Activated CD4-positive, alpha-beta memory T cell treated with anti-CD3 and anti-CD28 coated beads, Interleukin-2, amount 10 ng/mL, durations not matched to agents 7 days and 5 days (primary cell): ENCODE measurements at regions of chr2 and their contacts with region 1.

Region 1: GRCh38 chr2:24792874-24793760 is at the starts of genes CENPO and PTRHD1:
- DNase-seq: peak; percentile 96
- H3K4me3 Mint-ChIP-seq: peak within 1 kb of the TSS; percentile 96
- H3K27ac Mint-ChIP-seq: peak within 1 kb of the TSS; percentile 98
- H3K4me1 Mint-ChIP-seq: peaks cover 53% of the 10 kb centered on the region
- H3K27me3 Mint-ChIP-seq: no peaks in the 10 kb centered on the region
- total RNA-seq, gene CENPO: 40.3 to 42.9 TPM
- total RNA-seq, gene PTRHD1: 25.4 to 25.5 TPM

Region 2: GRCh38 chr2:24920098-24920808 is 127.1 kb after region 1 on chr2 and contains the start of gene ADCY3:
- CTCF ChIA-PET with region 1: no interaction called
- POLR2A ChIA-PET with region 1: interaction called, 15 read pairs
- DNase-seq: peak; percentile 70
- H3K4me3 Mint-ChIP-seq: peak within 1 kb of the TSS; percentile 83
- H3K27ac Mint-ChIP-seq: peak within 1 kb of the TSS; percentile 72
- H3K4me1 Mint-ChIP-seq: peaks cover 39% of the 10 kb centered on the region
- H3K27me3 Mint-ChIP-seq: no peaks in the 10 kb centered on the region
- total RNA-seq, gene ADCY3: 55.6 to 58.5 TPM

Region 3: GRCh38 chr2:24986372-24986771 is 193.3 kb after region 1 on chr2:
- CTCF ChIA-PET with region 1: no interaction called
- POLR2A ChIA-PET with region 1: no interaction called
- DNase-seq: no peak
- H3K4me3 Mint-ChIP-seq: no peak overlapping the region
- H3K27ac Mint-ChIP-seq: no peak overlapping the region
- H3K4me1 Mint-ChIP-seq: no peaks in the 10 kb centered on the region
- H3K27me3 Mint-ChIP-seq: peaks cover 5% of the 10 kb centered on the region